HCT116 (cell line): ENCODE measurements at regions of chr6 and their contacts with region 1.

Region 1: DNA sequence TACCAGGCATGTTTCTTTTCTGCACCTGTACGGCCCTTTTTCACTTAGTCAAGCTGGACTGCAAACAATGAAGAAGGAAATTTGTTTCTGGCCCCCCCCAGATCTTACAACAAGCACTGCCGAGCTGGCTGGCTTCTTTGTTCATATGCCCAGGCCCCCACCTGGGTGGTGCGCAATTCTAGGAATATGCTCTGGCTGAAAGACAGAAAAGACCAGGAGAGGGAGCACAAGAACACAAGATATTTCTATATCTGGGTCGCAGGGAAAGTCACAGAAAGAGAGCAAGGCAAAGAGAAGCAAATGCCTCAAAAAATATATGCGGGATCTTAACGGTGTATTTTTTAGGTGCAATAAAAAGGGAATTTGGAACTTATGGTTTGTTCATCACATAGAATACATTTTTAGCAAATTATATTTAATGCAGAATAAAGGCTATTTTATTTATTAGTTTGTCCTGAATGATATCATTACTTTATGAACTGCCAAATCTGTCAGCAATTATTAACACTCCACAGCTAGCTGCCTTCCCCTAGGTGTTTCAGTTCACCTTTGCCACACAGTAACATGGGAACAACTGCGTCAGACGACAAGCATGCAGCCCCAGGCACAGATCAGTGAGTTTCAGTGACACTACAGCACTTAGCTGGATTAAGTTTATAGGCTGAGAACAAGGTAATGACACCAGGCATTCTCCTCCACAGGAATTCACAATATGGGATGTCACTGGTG is 76.5 kb downstream of the GJA10 start:
- DNase-seq: peak; percentile 16
- ATAC-seq: peak; percentile 88
- H3K4me3 ChIP-seq: no peak overlapping the region
- H3K27ac ChIP-seq: no peak overlapping the region
- H3K4me1 ChIP-seq: no peaks in the 10 kb centered on the region
- H3K27me3 ChIP-seq: no peaks in the 10 kb centered on the region
- CTCF ChIP-seq: peak; percentile 51 to 77 (median 62)
- POLR2A ChIP-seq: no peak
- RAD21 ChIP-seq: peak; percentile 86

Region 2: DNA sequence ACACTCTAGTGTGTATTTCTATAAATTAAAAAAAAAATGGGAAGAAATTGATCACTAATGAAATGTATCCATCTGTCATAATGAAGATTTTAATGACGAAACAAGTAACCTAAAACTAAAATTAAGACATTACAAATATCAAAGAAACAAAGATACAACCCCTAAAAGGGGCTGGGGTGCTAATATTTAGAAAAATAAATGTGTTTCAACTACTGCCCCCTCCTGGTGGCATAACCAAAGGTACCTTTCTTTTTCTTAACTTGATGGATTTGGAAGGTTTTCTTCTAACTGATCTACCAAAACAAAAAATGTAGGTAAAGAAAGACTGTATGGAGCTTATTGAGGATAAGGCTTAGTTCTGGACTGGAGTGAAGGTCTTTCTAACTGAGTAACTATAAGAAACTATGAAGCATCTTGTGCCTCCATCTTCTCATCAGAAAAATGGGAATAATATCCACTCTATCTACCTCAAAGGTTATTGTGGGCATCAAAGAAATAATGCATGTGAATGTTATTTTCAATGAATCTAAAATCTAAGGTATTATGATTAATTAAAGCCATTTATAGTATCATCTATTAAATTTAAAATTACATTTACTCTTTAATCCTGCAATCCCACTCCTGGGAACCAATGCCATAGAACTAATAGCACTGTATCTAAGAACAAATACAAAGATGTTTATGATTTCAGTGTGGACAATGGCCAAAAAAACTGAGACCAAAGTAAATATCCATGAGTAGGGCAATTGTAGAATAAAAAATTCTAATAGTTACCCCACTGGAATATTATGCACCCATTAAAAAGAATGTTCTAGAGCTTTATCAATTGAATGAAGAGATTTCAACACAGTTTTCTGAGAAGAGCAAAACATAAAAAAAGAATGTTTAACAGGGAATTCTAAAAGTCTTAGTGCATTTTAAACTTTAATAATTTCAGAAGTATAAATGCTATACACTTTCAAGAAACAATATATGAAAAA is 208.7 kb after region 1 on chr6:
- CTCF ChIA-PET with region 1: no interaction called
- POLR2A ChIA-PET with region 1: no interaction called
- RAD21 ChIA-PET with region 1: no interaction called
- intact Hi-C with region 1: loop called (anchors 5 kb)
- DNase-seq: no peak
- ATAC-seq: no peak
- H3K4me3 ChIP-seq: no peak overlapping the region
- H3K27ac ChIP-seq: no peak overlapping the region
- H3K4me1 ChIP-seq: peaks cover 0 to 9% of the 10 kb centered on the region in 2 experiments; a peak in 3 of 4 replicates
- H3K27me3 ChIP-seq: no peaks in the 10 kb centered on the region
- CTCF ChIP-seq: peak; percentile 22 to 62 (median 40); a peak in 4 of 6 replicates
- POLR2A ChIP-seq: no peak
- RAD21 ChIP-seq: peak; percentile 44

Region 3: GRCh38 chr6:90393232-90393884 is 422.6 kb after region 1 on chr6:
- CTCF ChIA-PET with region 1: no interaction called
- POLR2A ChIA-PET with region 1: no interaction called
- RAD21 ChIA-PET with region 1: no interaction called
- intact Hi-C with region 1: loop called (anchors 1 kb)
- DNase-seq: peak; percentile 41
- ATAC-seq: peak; percentile 95
- H3K4me3 ChIP-seq: no peak overlapping the region
- H3K27ac ChIP-seq: no peak overlapping the region
- H3K4me1 ChIP-seq: peaks cover 0 to 11% of the 10 kb centered on the region in 2 experiments; a peak in 1 of 4 replicates
- H3K27me3 ChIP-seq: no peaks in the 10 kb centered on the region
- CTCF ChIP-seq: peak; percentile 62 to 83 (median 76); a peak in 5 of 6 replicates
- POLR2A ChIP-seq: no peak
- RAD21 ChIP-seq: peak; percentile 86

Region 4: GRCh38 chr6:90434094-90434493 is 463.3 kb after region 1 on chr6:
- CTCF ChIA-PET with region 1: no interaction called
- POLR2A ChIA-PET with region 1: no interaction called
- RAD21 ChIA-PET with region 1: no interaction called
- intact Hi-C with region 1: loop called (anchors 2 kb)
- DNase-seq: no peak
- ATAC-seq: peak; percentile 74
- H3K4me3 ChIP-seq: no peak overlapping the region
- H3K27ac ChIP-seq: no peak overlapping the region
- H3K4me1 ChIP-seq: no peaks in the 10 kb centered on the region
- H3K27me3 ChIP-seq: no peaks in the 10 kb centered on the region
- CTCF ChIP-seq: peak; percentile 24 to 42 (median 36); a peak in 4 of 6 replicates
- POLR2A ChIP-seq: no peak
- RAD21 ChIP-seq: peak; percentile 73

Region 5: DNA sequence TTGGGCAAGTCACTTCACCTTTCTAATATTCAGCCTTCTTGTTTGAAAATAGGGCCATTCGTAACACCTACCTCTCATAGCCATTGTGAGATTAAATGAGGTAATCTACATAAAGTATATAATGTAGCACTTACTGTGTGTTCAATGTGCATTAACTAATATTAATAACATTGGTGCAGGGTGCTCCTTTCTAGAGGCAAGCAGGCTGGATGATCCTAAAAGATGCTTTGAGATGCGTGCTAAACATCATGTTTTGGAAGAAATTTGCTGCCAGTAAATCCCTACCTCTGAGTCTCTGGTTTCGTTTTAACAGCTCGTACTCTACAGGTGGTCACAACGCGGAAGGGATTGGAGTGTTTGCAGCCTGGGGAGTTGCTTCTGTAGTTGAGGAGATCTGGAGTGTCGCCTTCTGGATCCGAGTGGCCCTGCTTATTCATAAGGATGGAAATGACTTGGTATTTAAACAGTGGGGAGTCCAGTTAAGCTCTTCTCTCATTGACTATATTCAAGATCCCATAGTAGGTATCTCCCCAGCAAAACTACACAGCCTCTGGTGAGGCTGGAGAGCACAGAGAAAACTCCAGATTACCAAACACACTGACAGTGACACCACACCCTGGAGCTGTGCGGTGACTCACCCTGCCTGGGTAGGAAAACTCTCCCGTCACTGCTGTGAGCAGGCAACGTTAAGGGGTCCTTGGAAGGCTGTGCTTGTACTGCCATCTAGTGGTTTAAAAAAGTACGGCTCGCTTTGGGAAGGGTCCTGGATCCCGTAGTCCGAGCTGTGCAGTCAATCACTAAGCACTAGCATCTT is 508.2 kb after region 1 on chr6:
- CTCF ChIA-PET with region 1: interaction called, 5 read pairs
- POLR2A ChIA-PET with region 1: no interaction called
- RAD21 ChIA-PET with region 1: no interaction called
- intact Hi-C with region 1: loop called (anchors 1 kb)
- DNase-seq: peak; percentile 87
- ATAC-seq: peak; percentile 96
- H3K4me3 ChIP-seq: no peak overlapping the region
- H3K27ac ChIP-seq: no peak overlapping the region
- H3K4me1 ChIP-seq: peaks cover 0 to 11% of the 10 kb centered on the region in 2 experiments; a peak in 2 of 4 replicates
- H3K27me3 ChIP-seq: no peaks in the 10 kb centered on the region
- CTCF ChIP-seq: peak; percentile 79 to 91 (median 87)
- POLR2A ChIP-seq: no peak
- RAD21 ChIP-seq: peak; percentile 99